ENCODE measurements at regions of chr15 and their contacts with region 1.

Region 1: GRCh38 chr15:70799667-70800450 is 36.5 kb upstream of the UACA start:
- DNase-seq: no peak

Region 2: DNA sequence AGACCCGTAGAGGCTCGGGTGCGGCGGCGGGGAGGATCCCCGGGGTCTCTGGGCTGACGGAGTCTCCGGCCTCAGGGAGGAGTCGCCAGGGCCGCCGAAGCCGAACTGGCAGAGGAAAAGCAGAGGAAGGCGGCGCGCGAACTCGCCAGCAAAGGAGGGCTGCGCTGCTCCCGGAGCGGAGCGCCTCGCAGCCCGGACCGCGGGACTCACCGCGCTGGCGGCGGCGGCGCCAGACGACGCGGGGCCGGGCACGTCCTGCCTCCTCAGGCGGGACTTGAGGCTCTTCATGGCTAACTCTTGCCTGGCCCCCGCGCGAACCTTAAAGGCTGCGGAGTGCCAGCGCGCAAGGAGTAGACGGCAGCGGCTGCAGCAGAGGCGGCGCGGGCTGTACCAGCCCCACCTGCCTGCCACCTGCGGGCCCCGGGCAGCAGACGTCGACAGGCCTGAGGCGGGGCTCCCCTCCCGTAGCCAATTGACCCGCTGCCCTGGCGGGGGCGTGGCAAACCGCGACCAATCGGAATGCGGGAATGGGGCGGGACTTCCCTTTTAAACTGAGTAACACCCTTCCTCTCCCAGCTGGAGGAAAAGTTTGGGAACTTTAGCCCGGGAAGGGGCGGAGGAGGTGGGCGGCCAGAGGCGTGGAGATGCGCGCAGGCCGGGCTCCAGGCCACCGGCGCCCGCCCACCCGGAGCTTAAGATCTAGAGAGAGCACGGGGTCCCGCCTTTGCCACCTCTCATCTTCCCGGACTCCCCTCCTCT is 36.6 kb before region 1 on chr15 and contains the start of gene UACA:
- intact Hi-C with region 1: loop called (anchors 5 kb)
- DNase-seq: peak; percentile 97
- total RNA-seq, gene UACA: 78.0 TPM

Measured in cardiac septum (tissue), 1 donor.